ENCODE measurements at regions of chr6 and their contacts with region 1.

Region 1: DNA sequence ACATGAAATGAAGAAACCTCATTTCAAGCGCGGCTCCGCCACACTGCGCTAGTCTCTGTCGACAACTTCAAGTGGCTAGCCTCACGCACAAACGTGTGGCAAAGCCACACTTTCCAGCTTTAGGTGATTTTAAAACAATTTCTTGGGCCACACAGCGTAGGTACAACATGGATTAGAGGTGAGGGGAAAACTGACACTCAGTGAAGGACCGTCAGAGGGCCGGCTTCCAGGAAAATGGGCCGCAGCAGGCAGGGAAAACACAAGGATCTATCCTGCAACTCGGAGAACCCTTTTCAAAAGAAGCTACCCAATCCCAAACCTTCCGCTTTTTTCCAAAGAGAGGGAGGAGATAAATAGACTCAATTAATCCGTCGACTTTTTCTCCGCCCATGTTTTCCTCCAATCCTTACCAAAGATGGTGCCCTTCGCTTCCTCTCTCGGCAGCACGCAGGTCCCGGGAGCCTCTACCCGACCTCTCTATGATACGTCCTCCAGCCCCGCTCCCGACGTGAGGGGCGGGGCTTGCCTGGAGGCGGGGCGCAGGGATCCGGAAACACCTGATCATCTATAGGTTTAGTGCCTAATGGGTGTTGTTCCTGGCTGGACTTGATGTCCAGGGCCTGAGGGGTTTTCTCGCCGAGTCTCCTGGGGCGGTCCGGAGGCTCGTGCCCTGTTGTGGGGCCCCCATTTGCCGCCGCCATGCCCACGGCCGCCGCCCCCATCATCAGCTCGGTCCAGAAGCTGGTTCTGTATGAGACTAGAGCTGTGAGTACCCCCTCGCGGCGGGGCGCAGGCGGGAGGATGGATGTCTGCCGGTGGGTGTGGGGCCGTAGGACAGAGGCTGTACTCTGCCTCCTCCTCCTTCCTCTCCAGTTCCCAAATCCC is at the starts of genes AK9 and FIG4:
- DNase-seq: peak; percentile 95
- H3K4me3 Mint-ChIP-seq: peak within 1 kb of the TSS; percentile 96
- H3K27ac Mint-ChIP-seq: peak within 1 kb of the TSS; percentile 89
- H3K4me1 Mint-ChIP-seq: peaks cover 30% of the 10 kb centered on the region
- H3K27me3 Mint-ChIP-seq: no peaks in the 10 kb centered on the region
- total RNA-seq, gene AK9: 2.2 to 2.8 TPM
- total RNA-seq, gene FIG4: 17.3 to 18.2 TPM

Region 2: DNA sequence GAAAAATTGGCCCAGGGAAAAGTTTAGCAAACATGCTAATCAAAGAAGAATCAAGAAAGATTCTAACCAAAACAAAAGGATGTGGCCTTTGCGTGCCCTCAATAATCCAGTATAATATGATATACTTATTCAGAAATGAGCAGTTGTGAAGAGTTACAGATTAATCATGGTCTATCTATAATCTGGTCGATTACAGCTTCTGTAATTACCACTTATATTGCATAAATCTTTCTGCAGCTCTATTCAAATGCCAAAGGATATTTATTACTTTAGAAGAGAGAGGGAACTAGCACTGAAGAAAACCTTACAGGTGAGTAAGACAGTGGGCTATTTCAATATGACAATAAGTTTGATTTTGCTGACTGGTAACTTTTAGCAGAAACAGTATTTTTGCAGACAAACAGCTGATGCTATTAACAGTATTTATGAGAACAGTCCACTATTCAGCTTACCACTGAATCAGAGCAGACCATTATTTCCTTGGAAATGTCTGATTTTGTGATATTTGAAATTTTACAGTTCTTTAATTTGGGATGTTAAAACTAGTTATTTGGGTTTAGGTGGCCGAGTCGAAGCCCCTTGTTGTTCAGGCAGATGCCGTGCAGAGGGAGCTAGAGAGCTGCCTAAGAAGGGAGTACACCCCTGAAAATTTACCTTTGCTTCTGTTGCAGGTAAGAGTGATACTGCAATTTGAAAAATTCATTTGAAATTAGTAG is 503.4 kb before region 1 on chr6:
- CTCF ChIA-PET with region 1: no interaction called
- POLR2A ChIA-PET with region 1: no interaction called
- intact Hi-C with region 1: loop called (anchors 10 kb)
- DNase-seq: peak; percentile 69
- H3K4me3 Mint-ChIP-seq: no peak overlapping the region
- H3K27ac Mint-ChIP-seq: no peak overlapping the region
- H3K4me1 Mint-ChIP-seq: peaks cover 2% of the 10 kb centered on the region
- H3K27me3 Mint-ChIP-seq: peaks cover 19% of the 10 kb centered on the region

Region 3: GRCh38 chr6:109455502-109456282 is 235.3 kb before region 1 on chr6 and contains the start of gene MICAL1:
- CTCF ChIA-PET with region 1: no interaction called
- POLR2A ChIA-PET with region 1: no interaction called
- intact Hi-C with region 1: loop called (anchors 2 kb)
- DNase-seq: peak; percentile 78
- H3K4me3 Mint-ChIP-seq: peak within 1 kb of the TSS; percentile 93
- H3K27ac Mint-ChIP-seq: peak within 1 kb of the TSS; percentile 90
- H3K4me1 Mint-ChIP-seq: peaks cover 65% of the 10 kb centered on the region
- H3K27me3 Mint-ChIP-seq: no peaks in the 10 kb centered on the region
- total RNA-seq, gene MICAL1: 39.4 to 45.0 TPM

Region 4: GRCh38 chr6:109595998-109596397 is 95.0 kb before region 1 on chr6:
- CTCF ChIA-PET with region 1: interaction called, 3 read pairs
- POLR2A ChIA-PET with region 1: no interaction called
- intact Hi-C with region 1: loop called (anchors 10 kb)
- DNase-seq: no peak
- H3K4me3 Mint-ChIP-seq: no peak overlapping the region
- H3K27ac Mint-ChIP-seq: no peak overlapping the region
- H3K4me1 Mint-ChIP-seq: peaks cover 3% of the 10 kb centered on the region
- H3K27me3 Mint-ChIP-seq: no peaks in the 10 kb centered on the region

Region 5: GRCh38 chr6:109678240-109678639 is 12.7 kb before region 1 on chr6:
- CTCF ChIA-PET with region 1: no interaction called
- POLR2A ChIA-PET with region 1: no interaction called
- intact Hi-C with region 1: no loop called
- DNase-seq: no peak
- H3K4me3 Mint-ChIP-seq: no peak overlapping the region
- H3K27ac Mint-ChIP-seq: no peak overlapping the region
- H3K4me1 Mint-ChIP-seq: peaks cover 4% of the 10 kb centered on the region
- H3K27me3 Mint-ChIP-seq: no peaks in the 10 kb centered on the region

Region 6: GRCh38 chr6:110179401-110180227 is 488.6 kb after region 1 on chr6 and contains the start of gene WASF1:
- CTCF ChIA-PET with region 1: no interaction called
- POLR2A ChIA-PET with region 1: no interaction called
- intact Hi-C with region 1: loop called (anchors 1 kb)
- DNase-seq: peak; percentile 94
- H3K4me3 Mint-ChIP-seq: peak within 1 kb of the TSS; percentile 85
- H3K27ac Mint-ChIP-seq: no peak within 1 kb of the TSS
- H3K4me1 Mint-ChIP-seq: peaks cover 5% of the 10 kb centered on the region
- H3K27me3 Mint-ChIP-seq: peaks cover 10% of the 10 kb centered on the region
- total RNA-seq, gene WASF1: 1.9 to 2.6 TPM